Activated T-helper 1 cell treated with anti-CD3 and anti-CD28 coated beads, Interleukin-12 subunit alpha, Interleukin-12 subunit beta, Interleukin-2, Interleukin-4 antibody, amounts not matched to agents 30 ng/mL and 10 ng/mL and 1 ng/mL, durations not matched to agents 14 hours and 24 hours and 36 hours (primary cell): ENCODE measurements at regions of chr12 and their contacts with region 1.

Region 1: DNA sequence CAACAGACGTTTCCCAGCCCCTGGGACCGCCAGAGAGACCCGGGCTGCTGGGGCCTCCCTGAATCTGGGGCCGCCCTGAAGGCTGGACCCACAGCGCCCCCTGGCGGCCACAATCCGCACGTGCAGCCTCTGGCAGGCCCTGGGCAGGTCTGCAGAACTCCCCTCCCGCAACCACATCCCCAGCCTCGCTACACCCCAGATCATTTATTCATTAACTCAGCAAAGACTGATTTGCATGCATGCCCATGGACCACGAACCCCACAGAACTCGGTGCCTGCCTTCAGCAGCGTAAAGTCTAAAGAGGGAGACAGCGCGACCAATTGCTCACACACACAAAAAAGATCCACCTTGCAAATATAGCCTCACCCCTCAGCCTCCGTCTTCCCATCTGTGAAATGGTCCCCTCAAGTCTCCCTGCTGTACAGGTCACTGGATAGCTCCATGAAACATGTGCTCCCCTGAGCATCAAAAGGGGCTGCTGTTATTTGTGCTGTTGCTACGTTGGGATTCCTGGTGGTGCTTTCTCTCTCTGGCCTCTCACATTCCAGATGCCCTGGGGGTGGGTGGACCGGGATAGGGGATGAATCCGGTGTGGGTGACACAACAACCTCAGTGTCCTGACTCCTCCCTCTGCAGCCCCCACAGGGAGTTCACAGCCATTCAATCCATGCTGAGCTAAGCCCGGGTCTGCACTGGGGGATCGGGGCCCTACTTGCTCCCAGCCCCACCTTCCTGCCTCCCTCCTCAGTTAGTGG is 96.4 kb downstream of the SCARB1 start:
- DNase-seq: peak; percentile 76
- H3K4me3 Mint-ChIP-seq: no peak overlapping the region
- H3K27ac Mint-ChIP-seq: peak overlapping the region; percentile 29
- H3K4me1 Mint-ChIP-seq: peaks cover 27% of the 10 kb centered on the region
- H3K27me3 Mint-ChIP-seq: peaks cover 18% of the 10 kb centered on the region

Region 2: GRCh38 chr12:123972457-123973401 is 794.5 kb before region 1 on chr12 and contains the starts of genes CCDC92 and ZNF664:
- intact Hi-C with region 1: loop called (anchors 5 kb)
- DNase-seq: peak; percentile 91
- H3K4me3 Mint-ChIP-seq: peak within 1 kb of the TSS; percentile 91
- H3K27ac Mint-ChIP-seq: peak within 1 kb of the TSS; percentile 78
- H3K4me1 Mint-ChIP-seq: peaks cover 53% of the 10 kb centered on the region
- H3K27me3 Mint-ChIP-seq: peaks cover 15% of the 10 kb centered on the region
- total RNA-seq, gene CCDC92: 7.7 and 8.3 TPM in 2 replicates
- total RNA-seq, gene ZNF664: 66.9 and 68.1 TPM in 2 replicates

Region 3: GRCh38 chr12:124162151-124162989 is 604.9 kb before region 1 on chr12:
- intact Hi-C with region 1: loop called (anchors 5 kb)
- DNase-seq: no peak
- H3K4me3 Mint-ChIP-seq: no peak overlapping the region
- H3K27ac Mint-ChIP-seq: no peak overlapping the region
- H3K4me1 Mint-ChIP-seq: no peaks in the 10 kb centered on the region
- H3K27me3 Mint-ChIP-seq: peaks cover 1% of the 10 kb centered on the region

Region 4: DNA sequence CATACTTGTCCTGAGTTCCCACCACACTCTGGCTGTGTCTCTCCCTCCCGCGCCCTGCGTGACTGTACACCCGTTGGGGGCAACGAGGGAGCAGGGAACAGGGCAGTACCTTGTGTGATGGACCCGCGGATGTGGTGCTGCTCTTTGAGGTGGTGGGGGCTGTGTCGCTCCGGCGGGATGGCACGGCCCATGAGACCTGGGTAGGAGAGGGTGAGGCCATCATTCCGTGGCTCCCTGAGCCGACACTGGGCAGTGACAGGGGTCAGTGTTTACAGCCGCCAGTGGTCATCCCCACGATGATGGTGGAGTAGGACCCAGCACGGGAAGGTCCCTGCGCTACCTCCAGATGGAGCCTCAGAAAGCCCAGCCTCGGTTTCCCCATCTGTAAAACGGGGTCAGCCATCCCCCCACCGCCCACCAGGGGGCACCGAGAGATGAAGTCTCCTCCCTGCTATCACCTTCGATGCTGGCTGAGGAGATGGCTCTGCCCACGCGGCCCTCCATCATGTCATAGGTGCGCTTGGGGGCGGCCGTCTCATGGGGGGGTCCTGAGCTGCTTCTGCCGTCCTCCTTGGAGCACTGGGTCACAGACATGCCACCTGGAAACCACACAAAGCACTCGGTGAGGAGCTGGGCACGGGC is 419.4 kb before region 1 on chr12:
- intact Hi-C with region 1: loop called (anchors 1 kb)
- DNase-seq: no peak
- H3K4me3 Mint-ChIP-seq: no peak overlapping the region
- H3K27ac Mint-ChIP-seq: no peak overlapping the region
- H3K4me1 Mint-ChIP-seq: no peaks in the 10 kb centered on the region
- H3K27me3 Mint-ChIP-seq: no peaks in the 10 kb centered on the region

Region 5: DNA sequence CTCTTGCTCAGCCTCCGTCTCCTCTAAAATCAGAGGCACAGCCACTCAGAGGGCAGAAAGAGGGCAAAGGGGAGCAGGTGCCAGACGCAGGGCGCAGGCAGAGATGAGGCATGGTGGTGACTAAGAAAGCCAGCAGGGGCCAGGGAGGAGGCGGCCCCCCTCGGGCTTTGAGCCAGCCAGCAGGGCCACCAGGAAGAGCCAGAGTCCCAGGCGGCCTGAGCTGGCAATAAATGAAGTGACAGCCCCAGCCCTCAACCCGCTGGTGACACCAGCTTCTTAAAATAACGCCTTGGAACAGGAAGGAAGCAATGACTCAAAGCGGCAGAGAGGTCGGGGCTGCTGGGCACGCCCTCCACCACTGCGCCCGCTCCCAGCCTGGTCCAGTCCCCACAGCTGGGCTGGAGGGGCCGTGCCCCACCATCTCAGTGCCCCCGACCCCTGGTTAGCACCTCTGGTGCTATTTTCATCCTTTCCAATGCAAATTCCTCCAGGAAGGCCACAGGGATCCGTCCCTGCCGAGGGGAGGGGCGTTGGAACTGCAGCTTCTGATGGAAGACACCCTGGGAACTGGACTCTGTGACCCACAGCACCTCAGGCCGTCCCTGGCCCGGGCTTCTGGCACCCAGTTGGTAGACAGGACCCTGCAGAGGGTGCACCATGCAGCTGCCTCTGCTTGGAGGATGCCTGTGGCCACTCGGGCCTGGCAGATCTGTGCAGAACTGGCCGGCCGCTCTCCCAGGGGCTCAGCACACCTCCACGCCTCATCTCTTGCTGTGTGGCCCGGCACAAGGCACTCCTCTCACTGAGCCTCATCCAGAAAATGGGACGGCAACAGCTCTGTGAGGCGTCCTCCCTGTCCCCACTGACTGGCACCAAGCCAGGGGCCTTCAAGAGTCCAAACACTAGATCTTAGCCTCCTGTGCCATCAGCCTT is 313.6 kb before region 1 on chr12:
- intact Hi-C with region 1: loop called (anchors 2 kb)
- DNase-seq: peak; percentile 74
- H3K4me3 Mint-ChIP-seq: peak overlapping the region; percentile 39
- H3K27ac Mint-ChIP-seq: peak overlapping the region; percentile 55
- H3K4me1 Mint-ChIP-seq: peaks cover 44% of the 10 kb centered on the region
- H3K27me3 Mint-ChIP-seq: peaks cover 2% of the 10 kb centered on the region

Region 6: GRCh38 chr12:124567661-124568373 is 199.4 kb before region 1 on chr12:
- intact Hi-C with region 1: loop called (anchors 2 kb)
- DNase-seq: peak; percentile 82
- H3K4me3 Mint-ChIP-seq: peak overlapping the region; percentile 85
- H3K27ac Mint-ChIP-seq: peak overlapping the region; percentile 84
- H3K4me1 Mint-ChIP-seq: peaks cover 24% of the 10 kb centered on the region
- H3K27me3 Mint-ChIP-seq: peaks cover 3% of the 10 kb centered on the region

Region 7: GRCh38 chr12:125079648-125080645 is 312.7 kb after region 1 on chr12:
- intact Hi-C with region 1: no loop called
- DNase-seq: no peak
- H3K4me3 Mint-ChIP-seq: no peak overlapping the region
- H3K27ac Mint-ChIP-seq: no peak overlapping the region
- H3K4me1 Mint-ChIP-seq: no peaks in the 10 kb centered on the region
- H3K27me3 Mint-ChIP-seq: no peaks in the 10 kb centered on the region